CD4-positive, alpha-beta T cell (primary cell): ENCODE measurements at regions of chr1 and their contacts with region 1.

Region 1: GRCh38 chr1:109112652-109113285 is 1.1 kb upstream of the ELAPOR1 start:
- DNase-seq: peak; percentile 84 to 94 (median 89)
- ATAC-seq: peak; percentile 52
- H3K4me3 ChIP-seq: peak overlapping the region; percentile 63
- H3K4me3 Mint-ChIP-seq: peak overlapping the region; percentile 94
- H3K27ac ChIP-seq: peak overlapping the region in 1 of 2 donors; percentile 51
- H3K27ac Mint-ChIP-seq: peak overlapping the region; percentile 98
- H3K4me1 ChIP-seq: peaks cover 26% of the 10 kb centered on the region
- H3K4me1 Mint-ChIP-seq: peaks cover 31% of the 10 kb centered on the region
- H3K27me3 ChIP-seq: no peaks in the 10 kb centered on the region
- H3K27me3 Mint-ChIP-seq: peaks cover 9% of the 10 kb centered on the region
- CTCF ChIP-seq: peak; percentile 93

Region 2: GRCh38 chr1:108512239-108512981 is 600.4 kb before region 1 on chr1:
- CTCF ChIA-PET with region 1: no interaction called
- POLR2A ChIA-PET with region 1: no interaction called
- intact Hi-C with region 1: loop called in 1 of 2 experiments (anchors 5 kb)
- DNase-seq: peak in 4 of 14 experiments; percentile 6 to 75 (median 69)
- ATAC-seq: peak; percentile 77
- H3K4me3 ChIP-seq: no peak overlapping the region
- H3K4me3 Mint-ChIP-seq: no peak overlapping the region
- H3K27ac ChIP-seq: no peak overlapping the region
- H3K27ac Mint-ChIP-seq: no peak overlapping the region
- H3K4me1 ChIP-seq: no peaks in the 10 kb centered on the region
- H3K4me1 Mint-ChIP-seq: no peaks in the 10 kb centered on the region
- H3K27me3 ChIP-seq: peaks cover 0 to 10% of the 10 kb centered on the region in 2 experiments
- H3K27me3 Mint-ChIP-seq: peaks cover 13% of the 10 kb centered on the region
- CTCF ChIP-seq: peak; percentile 99

Region 3: GRCh38 chr1:108828022-108828961 is 284.5 kb before region 1 on chr1:
- CTCF ChIA-PET with region 1: interaction called, 10 read pairs
- POLR2A ChIA-PET with region 1: interaction called, 3 read pairs
- intact Hi-C with region 1: loop called (anchors 1 kb)
- DNase-seq: peak; percentile 46 to 83 (median 60)
- ATAC-seq: peak; percentile 68
- H3K4me3 ChIP-seq: no peak overlapping the region
- H3K4me3 Mint-ChIP-seq: no peak overlapping the region
- H3K27ac ChIP-seq: no peak overlapping the region
- H3K27ac Mint-ChIP-seq: no peak overlapping the region
- H3K4me1 ChIP-seq: peaks cover 4% of the 10 kb centered on the region
- H3K4me1 Mint-ChIP-seq: no peaks in the 10 kb centered on the region
- H3K27me3 ChIP-seq: no peaks in the 10 kb centered on the region
- H3K27me3 Mint-ChIP-seq: no peaks in the 10 kb centered on the region
- CTCF ChIP-seq: peak; percentile 78

Region 4: GRCh38 chr1:109027841-109028240 is 84.9 kb before region 1 on chr1:
- CTCF ChIA-PET with region 1: interaction called, 4 read pairs
- POLR2A ChIA-PET with region 1: interaction called, 3 read pairs
- intact Hi-C with region 1: loop called in 1 of 2 experiments (anchors 2 kb)
- DNase-seq: peak in 1 of 14 experiments; percentile 18
- ATAC-seq: no peak
- H3K4me3 ChIP-seq: no peak overlapping the region
- H3K4me3 Mint-ChIP-seq: no peak overlapping the region
- H3K27ac ChIP-seq: no peak overlapping the region
- H3K27ac Mint-ChIP-seq: no peak overlapping the region
- H3K4me1 ChIP-seq: no peaks in the 10 kb centered on the region
- H3K4me1 Mint-ChIP-seq: peaks cover 6% of the 10 kb centered on the region
- H3K27me3 ChIP-seq: no peaks in the 10 kb centered on the region
- H3K27me3 Mint-ChIP-seq: no peaks in the 10 kb centered on the region
- CTCF ChIP-seq: peak; percentile 27

Region 5: DNA sequence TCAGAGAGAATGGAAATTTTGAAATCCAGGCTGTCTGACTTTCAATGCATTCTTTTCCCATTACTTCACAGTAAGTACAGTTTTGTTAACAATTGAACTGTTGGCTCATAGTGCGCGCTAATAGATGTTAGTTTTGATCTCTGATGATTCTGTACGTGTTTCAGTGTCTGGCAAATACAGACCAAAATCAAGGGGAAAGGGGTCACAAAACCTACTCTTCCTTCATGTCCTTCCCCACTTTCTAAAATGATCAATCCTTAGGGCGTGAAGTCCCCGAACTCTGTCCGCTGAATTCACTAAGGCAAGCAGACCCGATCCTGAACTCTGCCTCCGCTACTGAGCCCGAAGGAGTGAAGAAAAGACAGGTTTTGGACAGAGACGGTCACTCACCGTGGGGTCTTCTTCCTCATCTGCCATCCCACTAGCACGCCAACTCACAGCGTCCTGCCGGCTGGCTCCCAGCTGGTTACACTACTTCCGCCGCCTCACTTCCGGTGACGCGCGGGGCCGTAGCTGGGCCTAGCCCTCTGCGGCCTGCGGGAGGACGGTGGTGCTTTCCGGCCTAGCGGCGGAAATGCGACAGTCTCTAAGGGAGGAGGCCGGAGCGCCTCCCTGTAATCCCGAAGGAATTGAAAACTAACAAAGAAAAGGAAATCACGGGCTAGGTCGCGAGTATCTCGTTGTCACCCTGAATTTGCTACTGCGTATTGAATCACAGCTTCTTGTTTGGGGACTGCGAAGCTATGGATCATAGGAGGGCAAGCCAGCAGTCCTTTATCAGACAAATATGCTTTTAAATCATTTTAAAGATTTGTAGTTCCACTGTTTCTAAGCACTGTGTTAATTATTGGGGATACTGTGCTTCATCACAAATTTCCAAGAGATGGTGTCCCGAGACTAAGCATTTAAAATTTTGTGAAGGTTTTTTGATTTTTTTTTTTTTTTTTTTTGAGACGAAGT is 37.0 kb before region 1 on chr1 and contains the start of gene TAF13:
- CTCF ChIA-PET with region 1: interaction called, 11 read pairs
- POLR2A ChIA-PET with region 1: interaction called, 8 read pairs
- intact Hi-C with region 1: no loop called
- DNase-seq: peak; percentile 69 to 93 (median 82)
- ATAC-seq: peak; percentile 94
- H3K4me3 ChIP-seq: peak within 1 kb of the TSS; percentile 88
- H3K4me3 Mint-ChIP-seq: peak within 1 kb of the TSS; percentile 95
- H3K27ac ChIP-seq: peak within 1 kb of the TSS; percentile 92 to 94
- H3K27ac Mint-ChIP-seq: peak within 1 kb of the TSS; percentile 99
- H3K4me1 ChIP-seq: peaks cover 12% of the 10 kb centered on the region
- H3K4me1 Mint-ChIP-seq: peaks cover 14% of the 10 kb centered on the region
- H3K27me3 ChIP-seq: no peaks in the 10 kb centered on the region
- H3K27me3 Mint-ChIP-seq: no peaks in the 10 kb centered on the region
- CTCF ChIP-seq: no peak
- total RNA-seq, gene TAF13: 25.9 to 26.5 TPM

Region 6: GRCh38 chr1:109099938-109100773 is 12.6 kb before region 1 on chr1:
- CTCF ChIA-PET with region 1: interaction called, 104 read pairs
- POLR2A ChIA-PET with region 1: interaction called, 126 read pairs
- intact Hi-C with region 1: loop called (anchors 1 kb)
- DNase-seq: peak; percentile 96 to 98 (median 97)
- ATAC-seq: peak; percentile 93
- H3K4me3 ChIP-seq: peak overlapping the region; percentile 94
- H3K4me3 Mint-ChIP-seq: peak overlapping the region; percentile 95
- H3K27ac ChIP-seq: peak overlapping the region; percentile 86 to 89
- H3K27ac Mint-ChIP-seq: peak overlapping the region; percentile 92
- H3K4me1 ChIP-seq: peaks cover 22% of the 10 kb centered on the region
- H3K4me1 Mint-ChIP-seq: peaks cover 12% of the 10 kb centered on the region
- H3K27me3 ChIP-seq: no peaks in the 10 kb centered on the region
- H3K27me3 Mint-ChIP-seq: no peaks in the 10 kb centered on the region
- CTCF ChIP-seq: peak; percentile 87

Region 7: DNA sequence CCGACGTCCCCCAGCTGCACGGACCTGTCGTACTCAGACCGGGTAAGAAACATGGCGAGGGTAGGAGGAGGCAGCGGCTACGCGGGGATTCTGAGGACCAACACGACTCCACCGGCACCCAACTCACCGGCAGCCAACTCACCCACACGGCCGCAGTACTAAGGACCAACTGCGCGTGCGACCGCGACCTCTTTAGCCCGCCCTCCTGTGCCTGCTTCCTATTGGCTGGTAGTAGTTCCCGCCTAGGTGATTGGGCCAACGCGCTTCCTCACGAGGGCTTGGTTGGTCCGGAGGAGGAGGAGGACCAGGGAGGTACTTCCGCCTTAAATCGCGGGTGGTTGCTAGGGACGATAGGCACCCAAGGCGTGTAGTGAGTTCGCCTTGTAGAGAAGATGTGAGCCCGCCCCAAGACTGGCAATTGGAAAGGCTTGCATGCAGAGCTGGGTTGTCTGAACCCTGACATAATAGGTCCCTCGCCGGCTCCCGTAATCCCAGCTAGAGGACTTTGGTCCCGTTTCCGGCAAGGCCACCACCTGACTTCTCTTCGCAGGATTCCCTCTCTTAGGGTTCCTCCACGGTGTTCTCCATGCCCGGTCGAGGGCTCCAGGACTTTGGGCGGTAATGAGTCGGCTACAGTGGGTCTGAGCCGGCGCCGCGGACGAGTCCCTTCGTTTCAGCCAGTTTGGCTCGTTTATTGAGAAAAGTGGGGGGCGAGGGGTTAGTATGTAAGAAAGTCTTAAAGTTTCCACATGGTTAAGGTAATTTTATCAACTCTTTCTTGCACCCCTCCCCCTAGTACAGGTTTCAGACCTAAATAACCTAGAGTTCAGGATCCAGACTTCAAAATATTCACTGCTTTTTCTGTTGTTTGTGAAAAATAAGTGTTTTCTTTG is 313.8 kb after region 1 on chr1 and contains the start of gene PSMA5:
- CTCF ChIA-PET with region 1: no interaction called
- POLR2A ChIA-PET with region 1: no interaction called
- intact Hi-C with region 1: loop called in 1 of 2 experiments (anchors 5 kb)
- DNase-seq: peak; percentile 87 to 99 (median 92)
- ATAC-seq: peak; percentile 91
- H3K4me3 ChIP-seq: peak within 1 kb of the TSS; percentile 98
- H3K4me3 Mint-ChIP-seq: peak within 1 kb of the TSS; percentile 98
- H3K27ac ChIP-seq: peak within 1 kb of the TSS; percentile 91 to 95
- H3K27ac Mint-ChIP-seq: peak within 1 kb of the TSS; percentile 98
- H3K4me1 ChIP-seq: peaks cover 33% of the 10 kb centered on the region
- H3K4me1 Mint-ChIP-seq: peaks cover 52% of the 10 kb centered on the region
- H3K27me3 ChIP-seq: no peaks in the 10 kb centered on the region
- H3K27me3 Mint-ChIP-seq: no peaks in the 10 kb centered on the region
- CTCF ChIP-seq: no peak
- total RNA-seq, gene PSMA5: 29.8 to 33.8 TPM

Region 8: GRCh38 chr1:109712321-109712864 is 599.6 kb after region 1 on chr1:
- CTCF ChIA-PET with region 1: no interaction called
- POLR2A ChIA-PET with region 1: no interaction called
- intact Hi-C with region 1: no loop called
- DNase-seq: peak in 1 of 14 experiments; percentile 3
- ATAC-seq: no peak
- H3K4me3 ChIP-seq: no peak overlapping the region
- H3K4me3 Mint-ChIP-seq: no peak overlapping the region
- H3K27ac ChIP-seq: no peak overlapping the region
- H3K27ac Mint-ChIP-seq: no peak overlapping the region
- H3K4me1 ChIP-seq: no peaks in the 10 kb centered on the region
- H3K4me1 Mint-ChIP-seq: no peaks in the 10 kb centered on the region
- H3K27me3 ChIP-seq: peaks cover 0 to 5% of the 10 kb centered on the region in 2 experiments
- H3K27me3 Mint-ChIP-seq: peaks cover 14% of the 10 kb centered on the region
- CTCF ChIP-seq: no peak